Gastrocnemius medialis (tissue), 4 donors: ENCODE measurements at regions of chr10 and their contacts with region 1.

Region 1: GRCh38 chr10:91493313-91493712 is 83.2 kb downstream of the HECTD2 start:
- DNase-seq: no peak
- ATAC-seq: peak in 1 of 2 donors; percentile 81
- H3K4me3 ChIP-seq: no peak overlapping the region
- H3K27ac ChIP-seq: no peak overlapping the region
- H3K4me1 ChIP-seq: peaks cover 0 to 4% of the 10 kb centered on the region in 2 donors
- H3K27me3 ChIP-seq: no peaks in the 10 kb centered on the region
- CTCF ChIP-seq: peak; percentile 52 to 72 (median 56)
- POLR2A ChIP-seq: no peak

Region 2: GRCh38 chr10:91541481-91541880 is 48.2 kb after region 1 on chr10:
- in situ Hi-C with region 1: loop called in 1 of 4 experiments (anchors 10 kb)
- intact Hi-C with region 1: no loop called
- DNase-seq: no peak
- ATAC-seq: no peak
- H3K4me3 ChIP-seq: no peak overlapping the region
- H3K27ac ChIP-seq: no peak overlapping the region
- H3K4me1 ChIP-seq: peaks cover 0 to 3% of the 10 kb centered on the region in 2 donors
- H3K27me3 ChIP-seq: no peaks in the 10 kb centered on the region
- CTCF ChIP-seq: no peak
- POLR2A ChIP-seq: no peak

Region 3: DNA sequence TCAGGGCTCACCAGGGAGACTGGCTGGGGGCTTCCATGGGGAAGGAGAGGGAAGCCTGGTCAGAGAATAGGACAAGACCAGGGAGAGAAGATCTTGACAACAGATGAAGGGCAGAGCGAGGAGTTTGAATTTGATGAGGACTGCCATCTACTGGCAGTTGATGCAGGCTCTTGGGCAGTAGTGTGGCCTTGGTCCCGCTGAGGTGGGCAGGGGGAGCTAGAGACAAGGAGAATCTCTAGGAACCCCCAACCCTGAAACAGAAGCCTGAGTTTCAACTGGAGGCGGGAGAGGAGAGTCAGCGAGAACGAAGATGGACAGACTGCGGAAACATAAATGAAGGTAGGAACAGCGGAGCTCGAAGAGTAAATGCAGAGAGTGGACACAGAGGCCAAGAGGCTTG is 58.5 kb after region 1 on chr10:
- in situ Hi-C with region 1: loop called in 1 of 4 experiments (anchors 10 kb)
- intact Hi-C with region 1: loop called (anchors 5 kb)
- DNase-seq: no peak
- ATAC-seq: peak; percentile 46 to 66
- H3K4me3 ChIP-seq: no peak overlapping the region
- H3K27ac ChIP-seq: no peak overlapping the region
- H3K4me1 ChIP-seq: peaks cover 8 to 16% of the 10 kb centered on the region in 2 donors
- H3K27me3 ChIP-seq: no peaks in the 10 kb centered on the region
- CTCF ChIP-seq: peak in 3 of 5 experiments; percentile 33 to 55 (median 34)
- POLR2A ChIP-seq: no peak